Activated CD8-positive, alpha-beta T cell treated with anti-CD3 and anti-CD28 coated beads, Interleukin-2, amount 10 ng/mL, durations not matched to agents 7 days and 5 days (primary cell): ENCODE measurements at regions of chr21 and their contacts with region 1.

Region 1: DNA sequence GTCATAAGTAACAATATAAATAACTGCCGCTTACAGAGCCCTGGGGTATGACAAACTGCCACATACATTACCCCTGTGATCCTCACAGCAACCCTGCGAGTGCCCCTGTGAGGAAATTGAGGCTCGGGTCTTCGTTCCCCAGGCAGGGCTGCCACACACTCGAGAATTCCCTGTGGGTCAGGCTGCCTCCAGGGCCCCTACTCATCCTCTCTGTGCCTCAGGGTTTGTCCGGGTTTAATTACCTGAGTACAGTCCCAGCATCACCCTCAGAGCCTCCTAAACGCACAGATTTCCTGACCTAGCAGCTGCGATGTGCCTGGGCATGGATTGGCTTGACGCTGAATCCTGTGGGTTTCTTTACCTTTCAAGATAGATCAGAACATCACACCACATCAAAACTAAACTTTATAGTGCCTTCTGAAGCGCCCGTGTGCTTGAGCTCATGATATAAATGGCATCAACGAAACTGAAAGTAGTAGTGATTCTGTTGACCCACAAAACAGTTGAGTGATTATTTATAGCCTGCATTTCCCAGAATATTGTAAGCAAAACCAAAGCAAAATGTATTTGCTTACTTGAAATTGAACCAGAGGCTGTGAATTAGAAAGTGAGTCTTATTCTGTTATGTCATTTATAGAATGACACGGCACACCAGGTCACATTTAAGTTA is 14.0 kb downstream of the SLC37A1 start:
- DNase-seq: peak; percentile 76
- ATAC-seq: peak; percentile 90
- H3K4me3 Mint-ChIP-seq: peak overlapping the region; percentile 71
- H3K27ac Mint-ChIP-seq: peak overlapping the region; percentile 87
- H3K4me1 Mint-ChIP-seq: peaks cover 55% of the 10 kb centered on the region
- H3K27me3 Mint-ChIP-seq: no peaks in the 10 kb centered on the region

Region 2: DNA sequence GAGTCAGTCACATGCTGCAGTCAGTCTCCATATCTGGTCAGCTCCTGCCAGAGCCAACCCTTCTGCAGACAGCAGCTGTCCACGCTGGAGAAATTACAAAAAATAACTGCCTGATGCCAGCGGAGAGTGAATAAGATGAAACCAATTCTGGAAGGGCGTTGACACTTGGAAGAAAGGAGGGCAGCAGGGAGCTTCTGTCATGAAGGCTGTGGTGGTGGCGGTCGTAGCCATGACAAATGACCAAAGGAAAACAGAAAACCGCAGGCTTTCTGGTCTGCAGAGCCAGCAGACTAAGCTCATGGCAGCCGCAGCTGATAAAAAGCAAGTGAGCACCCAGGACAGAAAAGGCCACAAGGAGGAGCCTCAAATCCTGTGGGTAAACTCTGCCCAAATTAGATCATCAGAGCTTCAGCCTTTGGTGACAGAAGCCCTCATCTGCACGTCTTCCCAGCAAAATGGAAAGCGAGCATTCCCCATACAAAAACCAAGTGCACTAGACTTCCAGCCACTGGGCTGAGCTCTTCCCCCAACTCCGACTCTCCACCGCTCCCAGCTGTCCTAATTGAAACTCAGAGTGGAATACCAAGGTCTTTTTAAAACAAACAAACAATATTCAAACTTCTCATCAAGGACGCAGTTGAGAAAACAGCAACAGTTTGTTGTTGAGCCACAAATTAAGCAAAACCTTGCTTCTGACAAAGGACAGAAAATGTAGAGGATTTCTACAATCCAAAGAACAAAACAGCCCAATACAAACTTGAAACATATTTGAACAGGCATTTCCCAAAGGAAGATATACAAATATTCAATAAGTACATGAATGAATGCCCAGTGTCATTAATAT is 60.3 kb before region 1 on chr21:
- CTCF ChIA-PET with region 1: interaction called, 13 read pairs
- POLR2A ChIA-PET with region 1: no interaction called
- DNase-seq: peak; percentile 65
- ATAC-seq: no peak
- H3K4me3 Mint-ChIP-seq: no peak overlapping the region
- H3K27ac Mint-ChIP-seq: no peak overlapping the region
- H3K4me1 Mint-ChIP-seq: peaks cover 48% of the 10 kb centered on the region
- H3K27me3 Mint-ChIP-seq: peaks cover 4% of the 10 kb centered on the region

Region 3: GRCh38 chr21:42513985-42514882 is 13.4 kb before region 1 on chr21:
- CTCF ChIA-PET with region 1: interaction called, 3 read pairs
- POLR2A ChIA-PET with region 1: interaction called, 16 read pairs
- DNase-seq: peak; percentile 68
- ATAC-seq: peak; percentile 81
- H3K4me3 Mint-ChIP-seq: peak overlapping the region; percentile 81
- H3K27ac Mint-ChIP-seq: peak overlapping the region; percentile 82
- H3K4me1 Mint-ChIP-seq: peaks cover 35% of the 10 kb centered on the region
- H3K27me3 Mint-ChIP-seq: no peaks in the 10 kb centered on the region